Common myeloid progenitor, CD34-positive (primary cell): ENCODE measurements at regions of chr3 and their contacts with region 1.

Region 1: DNA sequence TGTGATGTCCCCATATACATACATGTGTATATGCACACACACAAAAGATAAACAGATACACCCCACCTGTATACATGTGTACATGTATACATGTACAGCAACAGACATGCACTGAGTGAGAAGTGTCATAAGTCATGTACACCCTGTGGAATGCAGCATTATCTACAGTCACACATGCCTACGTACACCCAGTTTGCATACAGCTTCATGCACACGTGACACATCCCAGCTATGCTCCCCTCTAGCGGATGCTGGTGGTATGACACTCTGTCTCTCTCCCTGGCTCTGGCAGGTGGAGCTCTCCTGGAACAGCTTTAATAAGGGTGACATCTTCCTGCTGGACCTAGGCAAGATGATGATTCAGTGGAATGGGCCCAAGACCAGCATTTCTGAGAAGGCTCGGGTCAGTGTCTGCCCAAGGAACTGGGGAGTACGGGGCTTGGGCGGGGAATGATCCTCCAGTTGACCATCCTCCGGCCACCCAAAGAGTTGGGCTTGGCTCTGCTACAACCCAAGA is 6.3 kb downstream of the VILL start:
- DNase-seq: peak; percentile 85 to 92 (median 89)
- H3K4me3 ChIP-seq: no peak overlapping the region
- H3K27ac ChIP-seq: no peak overlapping the region
- H3K4me1 ChIP-seq: peaks cover 0 to 46% (median 28%) of the 10 kb centered on the region in 4 experiments
- H3K27me3 ChIP-seq: no peaks in the 10 kb centered on the region

Region 2: DNA sequence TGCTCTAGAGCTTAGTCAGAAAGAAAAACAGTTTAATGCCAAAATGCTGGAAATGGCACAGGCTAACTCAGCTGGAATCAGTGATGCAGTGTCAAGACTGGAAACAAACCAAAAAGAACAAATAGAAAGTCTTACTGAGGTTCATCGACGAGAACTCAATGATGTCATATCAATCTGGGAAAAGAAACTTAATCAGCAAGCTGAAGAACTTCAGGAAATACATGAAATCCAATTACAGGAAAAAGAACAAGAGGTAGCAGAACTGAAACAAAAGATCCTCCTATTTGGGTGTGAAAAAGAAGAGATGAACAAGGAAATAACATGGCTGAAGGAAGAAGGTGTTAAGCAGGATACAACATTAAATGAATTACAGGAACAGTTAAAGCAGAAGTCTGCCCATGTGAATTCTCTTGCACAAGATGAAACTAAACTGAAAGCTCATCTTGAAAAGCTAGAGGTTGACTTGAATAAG is 672.0 kb before region 1 on chr3:
- CTCF ChIA-PET with region 1: no interaction called
- POLR2A ChIA-PET with region 1: no interaction called
- DNase-seq: peak in 1 of 3 donors; percentile 6
- H3K4me3 ChIP-seq: no peak overlapping the region
- H3K27ac ChIP-seq: no peak overlapping the region
- H3K4me1 ChIP-seq: no peaks in the 10 kb centered on the region
- H3K27me3 ChIP-seq: no peaks in the 10 kb centered on the region

Region 3: GRCh38 chr3:37824954-37825328 is 171.9 kb before region 1 on chr3:
- CTCF ChIA-PET with region 1: no interaction called
- POLR2A ChIA-PET with region 1: no interaction called
- DNase-seq: no peak
- H3K4me3 ChIP-seq: no peak overlapping the region
- H3K27ac ChIP-seq: no peak overlapping the region
- H3K4me1 ChIP-seq: no peaks in the 10 kb centered on the region
- H3K27me3 ChIP-seq: no peaks in the 10 kb centered on the region

Region 4: GRCh38 chr3:37924453-37924852 is 72.4 kb before region 1 on chr3:
- CTCF ChIA-PET with region 1: no interaction called
- POLR2A ChIA-PET with region 1: no interaction called
- DNase-seq: no peak
- H3K4me3 ChIP-seq: no peak overlapping the region
- H3K27ac ChIP-seq: peak overlapping the region; percentile 1 to 64
- H3K4me1 ChIP-seq: peaks cover 10 to 74% (median 54%) of the 10 kb centered on the region in 4 experiments
- H3K27me3 ChIP-seq: no peaks in the 10 kb centered on the region

Region 5: GRCh38 chr3:37979541-37980461 is 17.0 kb before region 1 on chr3:
- CTCF ChIA-PET with region 1: interaction called, 23 read pairs
- POLR2A ChIA-PET with region 1: no interaction called
- DNase-seq: no peak
- H3K4me3 ChIP-seq: no peak overlapping the region
- H3K27ac ChIP-seq: no peak overlapping the region
- H3K4me1 ChIP-seq: peaks cover 0 to 1% (median 0%) of the 10 kb centered on the region in 4 experiments
- H3K27me3 ChIP-seq: no peaks in the 10 kb centered on the region